IMR-90 (cell line): ENCODE measurements at regions of chr13 and their contacts with region 1.

Region 1: DNA sequence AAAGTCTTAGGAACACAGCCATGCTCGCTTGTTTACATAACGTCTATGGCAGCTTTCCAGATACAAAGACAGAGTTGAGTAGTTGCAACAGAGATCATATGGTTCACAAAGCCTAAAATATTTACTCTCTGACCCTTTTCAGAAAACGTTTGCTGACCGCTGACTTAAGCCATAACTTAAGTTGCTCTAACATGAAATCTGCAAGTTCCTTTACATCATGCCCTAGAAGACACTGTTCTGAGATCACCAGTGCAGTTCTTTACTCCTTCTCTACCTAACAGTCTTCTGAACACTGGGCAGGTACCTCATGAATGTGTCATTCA is 166.4 kb downstream of the DCLK1 start:
- DNase-seq: peak; percentile 68
- ATAC-seq: peak; percentile 83
- H3K4me3 ChIP-seq: no peak overlapping the region
- H3K27ac ChIP-seq: no peak overlapping the region
- H3K4me1 ChIP-seq: peaks cover 2% of the 10 kb centered on the region; the same call in 1 of the 2 replicates
- H3K27me3 ChIP-seq: no peaks in the 10 kb centered on the region; the same call in 1 of the 2 replicates
- CTCF ChIP-seq: no peak
- POLR2A ChIP-seq: no peak
- RAD21 ChIP-seq: no peak

Region 2: GRCh38 chr13:35388441-35389355 is 576.1 kb before region 1 on chr13:
- CTCF ChIA-PET with region 1: no interaction called
- POLR2A ChIA-PET with region 1: no interaction called
- dilution Hi-C with region 1: no loop called
- in situ Hi-C with region 1: no loop called
- intact Hi-C with region 1: no loop called
- DNase-seq: peak; percentile 3
- ATAC-seq: peak; percentile 44; the same call in 1 of the 2 replicates
- H3K4me3 ChIP-seq: no peak overlapping the region
- H3K27ac ChIP-seq: no peak overlapping the region
- H3K4me1 ChIP-seq: no peaks in the 10 kb centered on the region
- H3K27me3 ChIP-seq: no peaks in the 10 kb centered on the region
- CTCF ChIP-seq: no peak
- POLR2A ChIP-seq: no peak
- RAD21 ChIP-seq: no peak

Region 3: DNA sequence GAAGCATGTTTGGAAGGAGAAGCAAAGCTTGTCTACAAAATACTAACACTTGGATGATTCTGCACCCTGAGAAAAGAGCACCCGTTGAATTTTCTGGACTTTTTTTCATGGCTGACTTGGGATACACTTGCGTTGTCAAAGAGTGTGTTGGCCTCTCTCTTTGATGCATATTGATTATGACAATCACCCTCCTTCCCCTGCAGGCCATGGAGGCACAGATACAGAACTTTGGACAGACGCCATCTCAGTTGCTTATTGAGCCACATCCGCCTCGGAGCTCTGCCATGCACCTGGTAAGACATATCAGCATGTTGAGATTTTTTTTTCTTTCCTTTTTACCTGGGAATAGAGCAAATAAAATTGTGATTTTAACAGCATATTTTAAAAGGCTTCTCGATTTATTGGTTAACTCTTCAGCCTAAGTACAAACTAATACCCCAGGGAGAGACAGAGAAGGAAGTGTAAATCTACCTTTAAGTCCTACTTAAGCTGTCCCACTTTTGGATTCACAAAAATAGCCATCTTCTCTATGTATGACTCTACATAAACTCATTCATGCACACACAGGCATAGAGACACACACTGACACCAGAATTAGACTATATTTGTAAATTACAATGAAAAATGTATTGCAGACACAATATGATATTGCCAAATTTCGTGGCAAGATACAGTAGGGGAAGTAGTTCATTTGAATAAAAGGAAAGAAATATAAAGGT is 318.6 kb before region 1 on chr13:
- CTCF ChIA-PET with region 1: no interaction called
- POLR2A ChIA-PET with region 1: interaction called, 12 read pairs
- dilution Hi-C with region 1: no loop called
- in situ Hi-C with region 1: no loop called
- intact Hi-C with region 1: no loop called
- DNase-seq: no peak
- ATAC-seq: no peak
- H3K4me3 ChIP-seq: no peak overlapping the region
- H3K27ac ChIP-seq: no peak overlapping the region
- H3K4me1 ChIP-seq: peaks cover 2% of the 10 kb centered on the region; the same call in 1 of the 2 replicates
- H3K27me3 ChIP-seq: no peaks in the 10 kb centered on the region
- CTCF ChIP-seq: no peak
- POLR2A ChIP-seq: no peak
- RAD21 ChIP-seq: no peak